ENCODE measurements at regions of chr11 and their contacts with region 1.

Region 1: DNA sequence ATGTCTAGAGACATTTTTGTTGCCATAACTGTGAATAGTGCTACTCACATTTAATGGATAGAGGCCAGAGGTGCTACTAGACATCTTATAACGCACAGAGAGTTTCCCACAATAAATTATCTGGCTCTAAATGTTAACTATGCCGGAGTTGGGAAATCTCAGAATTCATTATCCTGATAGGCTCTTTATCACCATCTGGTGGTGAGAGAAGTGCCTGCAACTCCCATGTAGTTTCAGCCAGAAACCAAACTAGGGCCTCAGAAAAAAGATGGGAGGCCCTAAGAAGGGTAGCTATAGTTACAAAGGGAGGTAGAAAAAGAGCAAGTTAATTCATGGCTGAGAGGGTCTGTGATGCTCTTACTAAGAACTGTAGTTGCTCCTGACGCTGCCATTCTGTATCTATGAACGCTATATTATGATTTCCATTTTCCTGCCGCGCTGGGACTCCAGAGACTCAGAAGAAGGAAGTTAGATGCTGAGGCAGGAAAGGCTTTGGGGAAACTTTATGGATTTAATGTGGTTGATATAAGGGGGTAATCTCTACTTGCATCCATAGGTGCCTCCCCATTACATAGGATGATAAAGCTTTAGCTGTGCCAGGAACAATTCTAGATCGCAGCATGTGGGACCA is 22.9 kb upstream of the MRPL17 start:
- DNase-seq: peak; percentile 16
- H3K4me3 Mint-ChIP-seq: no peak overlapping the region
- H3K27ac Mint-ChIP-seq: no peak overlapping the region
- H3K4me1 Mint-ChIP-seq: peaks cover 8% of the 10 kb centered on the region
- H3K27me3 Mint-ChIP-seq: no peaks in the 10 kb centered on the region

Region 2: GRCh38 chr11:6531267-6531752 is 174.7 kb before region 1 on chr11:
- intact Hi-C with region 1: loop called (anchors 1 kb)
- DNase-seq: no peak
- H3K4me3 Mint-ChIP-seq: no peak overlapping the region
- H3K27ac Mint-ChIP-seq: no peak overlapping the region
- H3K4me1 Mint-ChIP-seq: peaks cover 12% of the 10 kb centered on the region
- H3K27me3 Mint-ChIP-seq: no peaks in the 10 kb centered on the region

Region 3: GRCh38 chr11:6667733-6668374 is 38.2 kb before region 1 on chr11:
- intact Hi-C with region 1: no loop called
- DNase-seq: peak; percentile 29
- H3K4me3 Mint-ChIP-seq: no peak overlapping the region
- H3K27ac Mint-ChIP-seq: no peak overlapping the region
- H3K4me1 Mint-ChIP-seq: peaks cover 50% of the 10 kb centered on the region
- H3K27me3 Mint-ChIP-seq: peaks cover 3% of the 10 kb centered on the region

Measured in activated T-helper 2 cell treated with anti-CD3 and anti-CD28 coated beads, Interferon-gamma antibody, Interleukin-2, Interleukin-4, amounts not matched to agents 10 μg/mL and 5 μg/mL and 100 μg/mL, durations not matched to agents 14 hours and 24 hours and 36 hours (primary cell).